ENCODE measurements at regions of chr1 and their contacts with region 1.

Region 1: DNA sequence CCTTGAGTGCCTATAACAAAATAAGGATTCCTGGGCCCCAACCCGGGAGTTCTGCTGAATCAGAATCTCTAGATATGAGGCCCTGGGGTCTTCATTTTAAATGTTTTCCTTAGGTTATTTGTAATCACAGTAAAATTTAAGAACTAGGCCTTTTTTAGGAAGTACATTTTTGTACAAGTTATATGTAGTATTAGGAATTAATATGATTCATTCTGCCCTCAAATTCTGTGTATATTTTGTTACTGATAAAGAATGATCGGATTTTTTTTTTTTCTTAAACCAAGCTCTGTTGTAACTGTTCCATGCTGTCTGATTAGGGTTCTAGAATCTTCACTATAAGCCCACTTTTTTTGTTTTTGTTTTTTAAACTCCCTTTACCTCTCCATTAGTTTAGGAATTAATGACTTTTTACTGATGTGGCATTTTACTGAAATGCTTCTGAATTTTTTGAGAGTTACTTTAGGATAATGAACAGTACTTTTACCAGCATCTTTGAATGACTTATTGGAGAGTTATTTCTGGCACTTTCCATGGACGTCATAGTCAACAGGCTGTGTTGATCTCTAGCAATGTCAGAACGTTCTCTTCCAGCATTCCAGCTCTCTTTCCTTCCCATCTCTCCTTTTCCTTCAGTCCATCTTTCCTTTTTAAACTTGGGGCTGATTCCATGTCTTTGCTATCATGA is 48.3 kb downstream of the CLIC4 start:
- DNase-seq: no peak
- H3K4me3 ChIP-seq: peak overlapping the region; percentile 3 to 16
- H3K27ac ChIP-seq: peak overlapping the region; percentile 65 to 83
- H3K4me1 ChIP-seq: peaks cover 0 to 65% of the 10 kb centered on the region in 2 donors
- H3K27me3 ChIP-seq: no peaks in the 10 kb centered on the region
- CTCF ChIP-seq: no peak

Region 2: GRCh38 chr1:24769656-24770651 is 23.6 kb before region 1 on chr1:
- intact Hi-C with region 1: loop called (anchors 2 kb)
- DNase-seq: no peak
- H3K4me3 ChIP-seq: peak overlapping the region; percentile 10 to 25
- H3K27ac ChIP-seq: peak overlapping the region; percentile 93 to 97
- H3K4me1 ChIP-seq: peaks cover 6 to 74% of the 10 kb centered on the region in 2 donors
- H3K27me3 ChIP-seq: no peaks in the 10 kb centered on the region
- CTCF ChIP-seq: no peak

Region 3: DNA sequence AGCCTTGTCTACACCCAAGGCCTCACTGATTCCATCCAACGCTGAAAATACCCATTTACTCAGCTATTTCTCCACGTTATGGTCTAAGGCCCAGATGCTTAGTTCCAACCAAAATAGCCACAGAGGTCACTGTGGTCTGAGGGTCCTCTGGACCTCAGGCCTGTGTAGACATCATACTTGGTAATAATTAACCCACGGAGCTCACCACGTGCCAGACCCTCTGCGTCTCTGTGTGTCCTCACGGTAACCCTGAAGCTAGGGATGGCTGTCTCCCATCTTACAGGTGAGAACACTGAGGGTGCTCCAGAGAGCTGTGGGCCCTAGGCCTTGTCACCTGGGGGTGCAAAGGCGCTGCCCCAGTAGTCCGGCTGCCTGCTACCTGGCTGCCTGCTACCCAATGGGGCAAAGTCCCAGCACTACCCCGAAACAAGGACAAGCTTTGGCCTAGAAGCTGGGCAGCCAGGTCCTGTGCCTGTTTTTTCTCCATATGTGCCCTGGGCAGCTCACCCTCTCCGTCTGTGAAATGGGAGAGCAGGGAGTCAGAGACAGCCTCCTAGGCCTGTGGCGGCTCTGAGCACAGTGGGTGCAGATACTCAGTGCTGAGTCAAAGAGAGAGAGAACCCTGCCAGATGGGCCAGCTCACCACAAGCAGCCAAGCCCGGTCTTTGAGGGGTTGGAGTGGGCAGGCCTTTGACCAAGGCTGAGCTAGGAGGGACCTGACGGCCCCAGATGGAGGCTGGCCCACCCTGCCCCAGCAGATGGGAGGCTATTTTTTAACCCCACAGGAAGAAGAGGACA is 153.5 kb after region 1 on chr1:
- intact Hi-C with region 1: no loop called
- DNase-seq: no peak
- H3K4me3 ChIP-seq: no peak overlapping the region
- H3K27ac ChIP-seq: no peak overlapping the region
- H3K4me1 ChIP-seq: no peaks in the 10 kb centered on the region
- H3K27me3 ChIP-seq: no peaks in the 10 kb centered on the region
- CTCF ChIP-seq: no peak

Measured in ascending aorta (tissue), 2 donors.